ENCODE measurements at regions of chr1 and their contacts with region 1.

Region 1: GRCh38 chr1:169893494-169894362 is at the start of gene SCYL3:
- DNase-seq: peak; percentile 90
- ATAC-seq: peak; percentile 88
- H3K4me3 Mint-ChIP-seq: peak within 1 kb of the TSS; percentile 95
- H3K27ac Mint-ChIP-seq: peak within 1 kb of the TSS; percentile 100
- H3K4me1 Mint-ChIP-seq: peaks cover 41% of the 10 kb centered on the region
- H3K27me3 Mint-ChIP-seq: peaks cover 10% of the 10 kb centered on the region
- total RNA-seq, gene SCYL3: 15.6 to 19.2 TPM

Region 2: GRCh38 chr1:169794530-169795416 is 99.0 kb before region 1 on chr1 and contains the start of gene METTL18:
- POLR2A ChIA-PET with region 1: interaction called, 45 read pairs
- DNase-seq: peak; percentile 88
- ATAC-seq: peak; percentile 98
- H3K4me3 Mint-ChIP-seq: peak within 1 kb of the TSS; percentile 87
- H3K27ac Mint-ChIP-seq: peak within 1 kb of the TSS; percentile 87
- H3K4me1 Mint-ChIP-seq: peaks cover 44% of the 10 kb centered on the region
- H3K27me3 Mint-ChIP-seq: no peaks in the 10 kb centered on the region
- total RNA-seq, gene METTL18: 17.8 to 18.6 TPM

Region 3: GRCh38 chr1:169906938-169907337 is 13.2 kb after region 1 on chr1:
- POLR2A ChIA-PET with region 1: interaction called, 11 read pairs
- DNase-seq: no peak
- ATAC-seq: no peak
- H3K4me3 Mint-ChIP-seq: no peak overlapping the region
- H3K27ac Mint-ChIP-seq: no peak overlapping the region
- H3K4me1 Mint-ChIP-seq: peaks cover 21% of the 10 kb centered on the region
- H3K27me3 Mint-ChIP-seq: no peaks in the 10 kb centered on the region

Region 4: GRCh38 chr1:169959686-169960085 is 66.0 kb after region 1 on chr1:
- POLR2A ChIA-PET with region 1: no interaction called
- DNase-seq: no peak
- ATAC-seq: no peak
- H3K4me3 Mint-ChIP-seq: no peak overlapping the region
- H3K27ac Mint-ChIP-seq: no peak overlapping the region
- H3K4me1 Mint-ChIP-seq: no peaks in the 10 kb centered on the region
- H3K27me3 Mint-ChIP-seq: no peaks in the 10 kb centered on the region

Region 5: GRCh38 chr1:170020859-170021258 is 127.1 kb after region 1 on chr1:
- POLR2A ChIA-PET with region 1: no interaction called
- DNase-seq: no peak
- ATAC-seq: no peak
- H3K4me3 Mint-ChIP-seq: no peak overlapping the region
- H3K27ac Mint-ChIP-seq: no peak overlapping the region
- H3K4me1 Mint-ChIP-seq: peaks cover 2% of the 10 kb centered on the region
- H3K27me3 Mint-ChIP-seq: no peaks in the 10 kb centered on the region

Region 6: DNA sequence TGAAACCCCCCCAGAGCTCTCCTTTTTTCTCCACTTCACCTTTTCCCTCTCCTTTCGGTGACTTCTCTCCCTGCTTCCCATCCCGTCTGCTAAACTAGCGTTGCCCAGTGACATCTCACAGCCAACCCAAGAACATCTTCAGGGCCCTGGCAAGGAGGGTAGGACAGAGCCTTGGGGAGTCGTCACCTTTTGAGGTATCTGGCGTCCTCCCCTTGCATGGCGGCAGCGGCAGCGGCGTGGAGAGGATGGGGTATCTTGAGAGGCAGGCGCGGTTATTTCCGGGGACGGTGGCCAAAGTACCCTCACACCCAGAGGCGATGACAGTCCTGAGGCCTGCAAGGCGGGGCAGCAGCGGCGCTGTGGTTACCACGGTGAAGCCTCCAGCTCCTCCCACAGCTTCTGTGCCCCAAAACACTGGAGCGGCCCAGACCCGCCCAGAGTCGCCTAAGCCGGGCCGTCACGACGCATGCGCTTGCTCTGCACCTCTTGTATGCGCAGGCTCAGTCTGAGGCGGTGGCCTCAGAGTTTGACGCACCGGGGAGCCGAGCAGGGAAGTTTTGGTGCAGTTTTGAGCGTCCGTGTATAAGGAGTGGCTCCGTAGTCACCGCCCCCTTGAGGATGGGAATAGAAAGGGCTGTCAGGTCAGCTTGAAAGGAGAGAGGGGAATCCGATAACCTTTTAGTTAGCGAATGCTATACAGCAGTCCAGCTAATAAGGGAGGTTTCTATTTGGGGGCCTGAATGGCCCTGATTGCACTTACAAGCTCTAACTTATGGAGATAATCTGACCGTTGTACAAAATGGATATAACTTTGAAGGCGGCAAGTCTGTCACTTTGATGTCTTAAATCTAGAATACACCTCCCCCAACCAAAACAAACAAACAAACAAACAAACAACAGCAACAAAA is 180.8 kb after region 1 on chr1 and contains the start of gene KIFAP3:
- POLR2A ChIA-PET with region 1: interaction called, 11 read pairs
- DNase-seq: peak; percentile 93
- ATAC-seq: peak; percentile 99
- H3K4me3 Mint-ChIP-seq: peak within 1 kb of the TSS; percentile 99
- H3K27ac Mint-ChIP-seq: peak within 1 kb of the TSS; percentile 95
- H3K4me1 Mint-ChIP-seq: peaks cover 28% of the 10 kb centered on the region
- H3K27me3 Mint-ChIP-seq: no peaks in the 10 kb centered on the region
- total RNA-seq, gene KIFAP3: 19.4 to 20.6 TPM

Measured in activated naive CD8-positive, alpha-beta T cell treated with anti-CD3 and anti-CD28 coated beads, Interleukin-2, amount 10 ng/mL, durations not matched to agents 7 days and 5 days (primary cell).